Esophagus muscularis mucosa (tissue), 4 donors: ENCODE measurements at regions of chr2 and their contacts with region 1.

Region 1: GRCh38 chr2:99430614-99431291 is 59.1 kb downstream of the REV1 start:
- DNase-seq: no peak
- H3K4me3 ChIP-seq: no peak overlapping the region
- H3K27ac ChIP-seq: peak overlapping the region; percentile 16 to 70 (median 50)
- H3K4me1 ChIP-seq: peaks cover 14 to 33% (median 26%) of the 10 kb centered on the region in 4 donors
- H3K27me3 ChIP-seq: no peaks in the 10 kb centered on the region
- CTCF ChIP-seq: no peak
- EP300 ChIP-seq: no peak
- POLR2A ChIP-seq: no peak

Region 2: DNA sequence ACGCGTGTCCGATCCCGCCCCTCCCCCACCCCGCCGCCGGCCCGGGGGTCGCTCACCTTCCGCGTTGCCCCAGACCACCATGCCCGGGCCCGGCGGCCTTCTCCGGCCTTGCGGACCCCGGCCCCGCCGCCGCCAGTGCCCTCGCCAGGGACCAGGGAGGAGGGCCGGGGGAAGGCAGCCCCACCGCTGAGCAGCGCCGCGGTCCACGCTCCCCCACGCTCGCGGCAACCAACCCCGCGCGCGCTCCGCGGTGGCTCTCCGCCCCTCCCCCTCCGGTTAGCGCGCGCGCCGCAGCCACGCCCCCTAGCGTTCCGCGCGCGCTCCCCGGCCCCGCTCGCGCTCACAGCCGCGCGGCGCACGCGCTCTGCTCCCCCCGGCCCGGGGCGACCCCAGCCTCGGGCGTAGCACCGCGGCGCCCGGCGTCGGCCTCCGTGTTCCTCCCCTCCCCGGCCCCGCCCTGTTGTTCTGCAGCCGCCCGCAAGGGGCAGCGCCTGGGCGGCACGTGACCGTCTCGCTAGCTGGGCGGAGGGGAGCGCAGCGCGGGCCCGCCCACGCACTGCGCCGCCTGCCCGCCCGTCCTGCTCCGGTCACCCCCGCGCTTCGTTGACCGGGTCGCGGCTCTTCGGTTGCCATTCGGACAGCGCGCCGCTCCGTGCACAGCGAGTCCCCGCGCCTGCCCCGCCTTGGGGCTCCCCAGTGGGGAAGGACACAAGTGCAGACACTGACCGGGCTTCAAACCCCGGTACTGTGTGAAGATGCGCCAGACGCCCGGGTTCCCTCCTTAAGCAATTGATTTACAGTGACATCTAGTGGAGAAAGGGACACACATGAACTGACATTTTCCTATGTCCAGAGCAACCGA is 59.2 kb after region 1 on chr2 and contains the start of gene REV1:
- intact Hi-C with region 1: loop called (anchors 5 kb)
- DNase-seq: peak; percentile 96
- H3K4me3 ChIP-seq: peak within 1 kb of the TSS; percentile 88 to 97 (median 94)
- H3K27ac ChIP-seq: peak within 1 kb of the TSS; percentile 97 to 99 (median 99)
- H3K4me1 ChIP-seq: peaks cover 23 to 48% (median 33%) of the 10 kb centered on the region in 4 donors
- H3K27me3 ChIP-seq: no peaks in the 10 kb centered on the region
- CTCF ChIP-seq: peak; percentile 64 to 82 (median 67)
- EP300 ChIP-seq: no peak
- POLR2A ChIP-seq: peak; percentile 27
- total RNA-seq, gene REV1: 26.7 to 47.7 (median 31.4) TPM

Region 3: DNA sequence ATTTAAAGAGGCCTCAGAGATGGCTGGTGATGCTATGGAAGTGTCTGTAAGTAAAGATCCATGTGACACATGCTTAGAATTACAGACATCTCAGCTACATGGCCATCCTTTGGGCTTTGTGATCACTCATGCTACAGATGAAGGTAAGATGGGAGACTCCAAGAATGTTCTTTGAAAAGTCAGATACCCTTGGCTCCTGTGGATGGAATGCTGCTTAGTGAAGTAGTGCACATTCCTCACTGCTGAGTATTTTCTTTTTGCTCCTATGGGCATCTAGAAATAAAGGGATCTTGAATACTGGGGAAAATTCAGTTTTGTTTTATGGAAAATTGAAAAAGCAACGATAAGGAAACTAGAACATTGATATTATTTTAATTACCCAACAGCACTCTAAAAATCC is 114.3 kb after region 1 on chr2:
- intact Hi-C with region 1: no loop called
- DNase-seq: no peak
- H3K4me3 ChIP-seq: no peak overlapping the region
- H3K27ac ChIP-seq: no peak overlapping the region
- H3K4me1 ChIP-seq: peaks cover 0 to 17% (median 8%) of the 10 kb centered on the region in 4 donors
- H3K27me3 ChIP-seq: no peaks in the 10 kb centered on the region
- CTCF ChIP-seq: no peak
- EP300 ChIP-seq: no peak
- POLR2A ChIP-seq: no peak